Upper lobe of right lung (tissue), 1 donor: ENCODE measurements at regions of chr10 and their contacts with region 1.

Region 1: GRCh38 chr10:129030996-129031843 is 435.8 kb upstream of the MGMT start:
- DNase-seq: no peak
- ATAC-seq: peak; percentile 93
- H3K4me3 ChIP-seq: no peak overlapping the region
- H3K27ac ChIP-seq: no peak overlapping the region
- H3K4me1 ChIP-seq: no peaks in the 10 kb centered on the region
- H3K27me3 ChIP-seq: peaks cover 43% of the 10 kb centered on the region
- CTCF ChIP-seq: peak; percentile 90

Region 2: DNA sequence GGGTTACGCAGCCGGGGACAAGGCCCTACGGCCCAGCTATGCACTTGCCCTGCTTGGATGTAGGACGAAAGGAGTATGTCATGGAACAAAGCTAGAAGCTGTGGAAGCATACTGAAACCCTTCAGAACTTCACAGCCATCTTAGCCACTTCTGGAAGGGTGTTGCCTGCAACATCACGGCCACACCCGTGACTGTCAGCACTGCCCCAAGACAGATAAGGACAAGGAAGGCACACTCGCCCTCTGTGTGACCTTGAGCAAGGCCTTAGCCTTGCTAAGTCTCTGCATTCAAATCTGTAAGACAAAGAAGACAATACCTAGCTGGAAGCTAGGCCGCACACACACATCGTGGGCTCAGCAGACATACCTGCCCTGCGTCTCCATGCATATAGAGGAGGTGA is 83.4 kb after region 1 on chr10:
- intact Hi-C with region 1: no loop called
- DNase-seq: no peak
- ATAC-seq: no peak
- H3K4me3 ChIP-seq: no peak overlapping the region
- H3K27ac ChIP-seq: no peak overlapping the region
- H3K4me1 ChIP-seq: no peaks in the 10 kb centered on the region
- H3K27me3 ChIP-seq: no peaks in the 10 kb centered on the region
- CTCF ChIP-seq: no peak

Region 3: DNA sequence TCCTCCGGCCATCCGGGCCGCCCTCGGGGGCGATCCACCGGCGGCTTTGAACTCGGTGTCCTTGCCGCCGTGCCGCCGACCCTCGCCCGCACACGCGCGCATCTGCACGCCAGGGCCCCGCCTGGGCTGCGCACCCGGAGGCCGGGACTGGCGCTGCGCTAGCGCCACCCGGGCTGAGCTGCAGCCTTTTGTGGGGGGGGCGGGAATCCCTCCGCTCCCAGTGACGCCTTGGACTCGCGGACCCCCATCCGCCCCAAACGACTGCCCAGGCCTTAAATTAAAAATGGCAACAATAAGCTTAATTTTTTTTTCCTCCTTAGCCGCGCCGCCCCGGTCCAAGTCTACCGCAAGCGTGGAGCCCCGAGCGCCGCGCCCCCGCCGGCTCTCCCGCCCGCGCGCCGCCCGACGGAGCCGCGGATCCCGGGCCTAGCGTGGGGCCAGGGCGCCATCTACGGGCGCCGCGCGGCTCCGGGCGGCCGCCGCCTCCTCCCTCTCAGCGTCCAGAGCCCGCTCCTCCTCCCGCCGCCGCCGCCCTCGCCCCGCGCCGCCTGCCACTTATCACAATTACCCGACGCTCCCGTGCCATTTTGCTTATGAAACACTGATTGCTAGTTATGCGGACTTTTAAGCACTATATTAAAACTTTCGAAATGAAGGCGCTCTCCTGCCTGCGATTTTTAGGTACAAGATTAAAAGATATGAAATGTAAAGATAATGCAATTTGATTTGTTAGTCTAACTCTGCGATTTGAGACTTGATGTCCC is 940.3 kb after region 1 on chr10:
- intact Hi-C with region 1: loop called (anchors 10 kb)
- DNase-seq: peak; percentile 83
- ATAC-seq: peak; percentile 93
- H3K4me3 ChIP-seq: no peak overlapping the region
- H3K27ac ChIP-seq: no peak overlapping the region
- H3K4me1 ChIP-seq: peaks cover 14% of the 10 kb centered on the region
- H3K27me3 ChIP-seq: peaks cover 95% of the 10 kb centered on the region
- CTCF ChIP-seq: peak; percentile 37